Activated naive CD4-positive, alpha-beta T cell treated with anti-CD3 and anti-CD28 coated beads for 36 hours (primary cell): ENCODE measurements at regions of chr11 and their contacts with region 1.

Region 1: DNA sequence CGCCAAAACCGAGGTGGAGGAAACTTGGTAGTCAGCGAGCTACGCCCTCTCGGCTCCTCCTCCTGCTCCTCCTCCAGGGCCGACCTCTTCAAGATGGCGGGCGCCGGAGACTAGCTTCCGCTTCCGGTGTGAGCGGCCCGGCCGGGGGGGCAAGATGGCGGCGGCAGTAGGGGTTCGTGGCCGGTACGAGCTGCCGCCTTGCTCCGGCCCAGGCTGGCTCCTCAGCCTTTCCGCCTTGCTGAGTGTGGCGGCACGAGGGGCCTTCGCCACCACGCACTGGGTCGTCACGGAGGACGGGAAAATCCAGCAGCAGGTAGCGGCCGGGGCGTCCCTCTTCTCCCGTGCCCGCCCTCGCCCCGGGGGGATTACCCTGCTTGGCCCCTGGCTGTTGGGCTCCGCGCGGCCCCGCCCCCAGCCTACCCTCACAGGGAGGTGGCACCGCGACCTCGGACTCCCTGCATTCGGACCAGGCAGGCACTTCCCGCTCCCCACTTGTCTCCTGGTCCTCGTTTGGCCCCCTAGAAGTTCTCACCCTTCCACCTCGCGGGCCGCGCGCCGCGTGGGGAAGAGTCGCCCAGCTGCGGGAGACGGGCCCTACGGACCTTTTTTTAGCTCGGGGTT is at the start of gene TTC17:
- DNase-seq: peak; percentile 96
- H3K4me3 Mint-ChIP-seq: peak within 1 kb of the TSS; percentile 95
- H3K27ac Mint-ChIP-seq: peak within 1 kb of the TSS; percentile 94
- H3K4me1 Mint-ChIP-seq: peaks cover 37% of the 10 kb centered on the region
- H3K27me3 Mint-ChIP-seq: no peaks in the 10 kb centered on the region
- total RNA-seq, gene TTC17: 57.1 to 64.3 TPM

Region 2: GRCh38 chr11:43399983-43400630 is 41.2 kb after region 1 on chr11:
- CTCF ChIA-PET with region 1: no interaction called
- intact Hi-C with region 1: loop called (anchors 2 kb)
- DNase-seq: peak; percentile 48
- H3K4me3 Mint-ChIP-seq: no peak overlapping the region
- H3K27ac Mint-ChIP-seq: peak overlapping the region; percentile 47
- H3K4me1 Mint-ChIP-seq: peaks cover 46% of the 10 kb centered on the region
- H3K27me3 Mint-ChIP-seq: no peaks in the 10 kb centered on the region

Region 3: GRCh38 chr11:43532041-43532440 is 173.1 kb after region 1 on chr11:
- CTCF ChIA-PET with region 1: no interaction called
- intact Hi-C with region 1: no loop called
- DNase-seq: no peak
- H3K4me3 Mint-ChIP-seq: no peak overlapping the region
- H3K27ac Mint-ChIP-seq: no peak overlapping the region
- H3K4me1 Mint-ChIP-seq: no peaks in the 10 kb centered on the region
- H3K27me3 Mint-ChIP-seq: peaks cover 16% of the 10 kb centered on the region

Region 4: GRCh38 chr11:44065841-44066731 is 707.2 kb after region 1 on chr11 and contains the start of gene ACCS:
- CTCF ChIA-PET with region 1: no interaction called
- intact Hi-C with region 1: loop called (anchors 5 kb)
- DNase-seq: peak; percentile 92
- H3K4me3 Mint-ChIP-seq: peak within 1 kb of the TSS; percentile 88
- H3K27ac Mint-ChIP-seq: peak within 1 kb of the TSS; percentile 93
- H3K4me1 Mint-ChIP-seq: peaks cover 20% of the 10 kb centered on the region
- H3K27me3 Mint-ChIP-seq: no peaks in the 10 kb centered on the region
- total RNA-seq, gene ACCS: 16.2 to 16.6 TPM

Region 5: GRCh38 chr11:44095506-44096394 is 736.8 kb after region 1 on chr11 and contains the start of gene EXT2:
- CTCF ChIA-PET with region 1: no interaction called
- intact Hi-C with region 1: no loop called
- DNase-seq: peak; percentile 84
- H3K4me3 Mint-ChIP-seq: peak within 1 kb of the TSS; percentile 87
- H3K27ac Mint-ChIP-seq: no peak within 1 kb of the TSS
- H3K4me1 Mint-ChIP-seq: peaks cover 24% of the 10 kb centered on the region
- H3K27me3 Mint-ChIP-seq: no peaks in the 10 kb centered on the region
- total RNA-seq, gene EXT2: 23.8 to 26.2 TPM